GM12878 (cell line): ENCODE measurements at regions of chr4 and their contacts with region 1.

Region 1: DNA sequence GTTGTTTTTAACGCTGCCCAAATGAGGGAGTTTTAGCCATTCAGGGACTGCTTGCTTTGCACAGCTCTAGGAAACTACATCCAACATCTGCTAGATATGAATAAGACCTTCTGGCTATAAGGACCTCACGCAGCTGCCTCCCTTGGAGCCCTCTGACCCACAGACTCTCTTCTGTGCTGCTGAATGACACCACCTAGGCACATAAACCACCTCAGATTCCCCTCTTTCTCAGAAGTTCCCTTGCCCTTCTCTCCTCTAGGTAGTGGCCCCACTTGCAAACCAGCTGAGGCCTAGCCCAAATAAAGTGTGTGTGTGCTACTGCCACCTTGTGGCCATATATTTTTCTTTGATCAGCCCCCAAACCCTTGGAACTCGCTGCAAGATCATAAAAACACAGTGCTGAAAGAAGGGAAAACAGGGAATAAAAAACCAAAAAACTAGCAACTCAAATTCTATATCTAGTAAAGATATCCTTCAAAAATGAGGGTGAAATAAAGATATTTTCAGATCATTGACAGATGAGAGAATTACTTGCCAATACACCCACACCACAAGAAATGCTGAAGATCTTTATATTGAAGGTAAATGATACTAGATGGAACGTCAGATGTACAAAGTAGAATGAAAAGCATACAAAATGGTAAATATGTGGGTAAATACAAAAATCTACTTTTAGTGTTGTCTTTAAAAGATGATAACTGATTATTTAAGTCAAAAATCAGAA is 265.9 kb downstream of the ADAMTS3 start:
- DNase-seq: no peak
- ATAC-seq: peak; percentile 99
- H3K4me3 ChIP-seq: no peak overlapping the region
- H3K27ac ChIP-seq: no peak overlapping the region
- H3K4me1 ChIP-seq: no peaks in the 10 kb centered on the region
- H3K27me3 ChIP-seq: no peaks in the 10 kb centered on the region
- CTCF ChIP-seq: peak; percentile 63 to 69 (median 69)
- EP300 ChIP-seq: no peak
- POLR2A ChIP-seq: no peak
- RAD21 ChIP-seq: peak; percentile 67

Region 2: GRCh38 chr4:70601422-70602039 is 1701.6 kb before region 1 on chr4:
- CTCF ChIA-PET with region 1: no interaction called
- POLR2A ChIA-PET with region 1: no interaction called
- RAD21 ChIA-PET with region 1: no interaction called
- SMC1A ChIA-PET with region 1: no interaction called
- in situ Hi-C with region 1: loop called (anchors 25 kb)
- intact Hi-C with region 1: loop called (anchors 10 kb)
- DNase-seq: peak; percentile 34
- ATAC-seq: peak; percentile 98
- H3K4me3 ChIP-seq: no peak overlapping the region
- H3K27ac ChIP-seq: no peak overlapping the region
- H3K4me1 ChIP-seq: no peaks in the 10 kb centered on the region
- H3K27me3 ChIP-seq: no peaks in the 10 kb centered on the region; a peak in 1 of 4 replicates
- CTCF ChIP-seq: peak; percentile 90 to 94 (median 92)
- EP300 ChIP-seq: no peak
- POLR2A ChIP-seq: no peak
- RAD21 ChIP-seq: peak; percentile 99

Region 3: GRCh38 chr4:71366766-71367165 is 936.4 kb before region 1 on chr4:
- CTCF ChIA-PET with region 1: no interaction called
- POLR2A ChIA-PET with region 1: no interaction called
- RAD21 ChIA-PET with region 1: no interaction called
- SMC1A ChIA-PET with region 1: no interaction called
- in situ Hi-C with region 1: no loop called
- intact Hi-C with region 1: no loop called
- DNase-seq: no peak
- ATAC-seq: no peak
- H3K4me3 ChIP-seq: no peak overlapping the region
- H3K27ac ChIP-seq: no peak overlapping the region
- H3K4me1 ChIP-seq: no peaks in the 10 kb centered on the region
- H3K27me3 ChIP-seq: no peaks in the 10 kb centered on the region
- CTCF ChIP-seq: no peak
- EP300 ChIP-seq: no peak
- POLR2A ChIP-seq: no peak
- RAD21 ChIP-seq: no peak

Region 4: GRCh38 chr4:71772592-71772991 is 530.6 kb before region 1 on chr4:
- CTCF ChIA-PET with region 1: interaction called, 14 read pairs
- POLR2A ChIA-PET with region 1: no interaction called
- RAD21 ChIA-PET with region 1: interaction called, 5 read pairs
- SMC1A ChIA-PET with region 1: interaction called, 3 read pairs
- in situ Hi-C with region 1: no loop called
- intact Hi-C with region 1: no loop called
- DNase-seq: no peak
- ATAC-seq: no peak
- H3K4me3 ChIP-seq: no peak overlapping the region
- H3K27ac ChIP-seq: no peak overlapping the region
- H3K4me1 ChIP-seq: no peaks in the 10 kb centered on the region
- H3K27me3 ChIP-seq: no peaks in the 10 kb centered on the region
- CTCF ChIP-seq: peak in 1 of 3 experiments; percentile 23; a peak in 1 of 6 replicates
- EP300 ChIP-seq: no peak
- POLR2A ChIP-seq: no peak
- RAD21 ChIP-seq: peak; percentile 41; the same call in 1 of the 2 replicates

Region 5: DNA sequence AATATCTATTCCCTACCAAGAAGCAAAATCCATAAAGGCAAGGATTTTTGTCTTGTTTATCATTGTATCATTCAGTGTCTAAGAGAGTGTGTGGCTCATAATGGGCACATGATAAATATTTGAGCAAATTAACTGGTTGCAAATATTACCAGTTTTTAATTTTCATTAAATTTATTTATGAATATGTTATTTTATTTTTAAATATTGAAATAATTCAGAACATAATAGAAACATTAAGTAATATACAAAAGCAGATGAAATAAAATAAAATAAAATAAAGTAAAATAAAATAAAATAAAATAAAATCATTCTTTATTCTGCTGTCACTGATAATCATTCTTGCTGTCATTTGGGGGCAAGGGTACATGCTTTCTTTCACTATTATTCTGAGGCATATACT is 150.4 kb before region 1 on chr4:
- CTCF ChIA-PET with region 1: no interaction called
- POLR2A ChIA-PET with region 1: no interaction called
- RAD21 ChIA-PET with region 1: no interaction called
- SMC1A ChIA-PET with region 1: no interaction called
- in situ Hi-C with region 1: no loop called
- intact Hi-C with region 1: no loop called
- DNase-seq: no peak
- ATAC-seq: no peak
- H3K4me3 ChIP-seq: no peak overlapping the region
- H3K27ac ChIP-seq: no peak overlapping the region
- H3K4me1 ChIP-seq: no peaks in the 10 kb centered on the region
- H3K27me3 ChIP-seq: no peaks in the 10 kb centered on the region
- CTCF ChIP-seq: no peak
- EP300 ChIP-seq: no peak
- POLR2A ChIP-seq: no peak
- RAD21 ChIP-seq: no peak

Region 6: DNA sequence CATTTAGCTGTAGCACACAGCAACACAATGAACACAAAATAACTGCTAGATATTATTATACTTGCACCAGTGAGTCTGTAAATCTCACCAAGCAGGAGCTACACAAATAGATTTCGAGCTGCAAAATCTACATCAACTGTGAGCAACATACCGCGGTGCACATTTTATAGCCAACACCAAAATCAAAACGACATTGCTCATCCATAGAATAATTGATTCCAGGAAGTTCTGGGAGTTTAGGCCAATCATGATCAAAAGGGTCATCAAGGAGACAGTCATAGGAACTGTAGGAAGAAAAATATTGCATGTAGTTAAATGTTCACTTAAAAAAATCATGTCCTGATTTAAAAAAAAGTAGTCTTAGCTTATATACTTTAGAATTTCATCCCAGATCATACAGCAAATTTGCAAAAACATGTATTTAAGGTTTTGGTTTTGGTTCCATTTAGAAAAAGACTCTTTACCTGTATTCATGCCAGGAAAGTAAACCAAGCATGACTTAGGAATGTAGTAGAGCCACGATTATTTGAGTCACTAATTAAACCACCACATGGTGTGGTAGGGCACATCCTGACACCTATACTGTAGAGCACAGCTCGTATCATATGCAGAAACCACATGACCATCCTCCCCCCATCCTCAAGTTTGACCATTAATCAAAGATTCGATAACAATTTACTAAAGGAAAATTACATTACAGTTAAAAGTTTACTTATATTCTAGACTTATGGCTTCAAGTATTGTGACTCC is 15.5 kb after region 1 on chr4:
- CTCF ChIA-PET with region 1: interaction called, 39 read pairs
- POLR2A ChIA-PET with region 1: no interaction called
- RAD21 ChIA-PET with region 1: no interaction called
- SMC1A ChIA-PET with region 1: no interaction called
- in situ Hi-C with region 1: no loop called
- intact Hi-C with region 1: no loop called
- DNase-seq: no peak
- ATAC-seq: no peak
- H3K4me3 ChIP-seq: no peak overlapping the region
- H3K27ac ChIP-seq: no peak overlapping the region
- H3K4me1 ChIP-seq: no peaks in the 10 kb centered on the region
- H3K27me3 ChIP-seq: no peaks in the 10 kb centered on the region
- CTCF ChIP-seq: no peak
- EP300 ChIP-seq: no peak
- POLR2A ChIP-seq: no peak
- RAD21 ChIP-seq: no peak

Region 7: DNA sequence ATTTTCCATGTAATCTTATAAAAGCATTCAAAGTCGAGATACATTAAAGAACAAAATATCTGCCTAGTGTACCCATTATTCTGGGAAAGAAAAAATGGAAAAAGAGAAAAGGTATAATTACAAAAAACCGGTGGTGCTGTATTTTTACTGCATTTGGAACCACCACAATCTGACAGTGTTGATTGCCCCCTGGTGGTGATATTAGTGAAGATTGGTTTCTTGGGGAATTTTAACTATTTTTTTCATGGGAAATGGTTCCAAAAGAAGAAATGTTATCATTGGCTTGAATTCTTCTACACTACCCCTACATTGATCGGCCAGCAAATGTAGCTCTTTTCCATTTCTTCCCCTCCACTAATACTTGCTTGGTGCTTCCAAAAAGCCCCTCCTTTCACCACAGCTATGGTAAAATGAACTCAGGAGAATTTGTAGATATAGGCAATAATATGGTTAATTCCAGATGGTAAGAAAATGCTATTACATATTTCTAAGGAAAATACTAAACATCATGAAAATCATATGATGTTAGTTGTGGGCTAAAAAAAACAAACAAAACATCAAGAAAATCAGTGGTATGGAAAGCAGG is 716.4 kb after region 1 on chr4:
- CTCF ChIA-PET with region 1: interaction called, 4 read pairs
- POLR2A ChIA-PET with region 1: no interaction called
- RAD21 ChIA-PET with region 1: interaction called, 3 read pairs
- SMC1A ChIA-PET with region 1: no interaction called
- in situ Hi-C with region 1: loop called (anchors 25 kb)
- intact Hi-C with region 1: no loop called
- DNase-seq: no peak
- ATAC-seq: peak; percentile 48; the same call in 1 of the 3 replicates
- H3K4me3 ChIP-seq: no peak overlapping the region
- H3K27ac ChIP-seq: no peak overlapping the region
- H3K4me1 ChIP-seq: no peaks in the 10 kb centered on the region
- H3K27me3 ChIP-seq: no peaks in the 10 kb centered on the region
- CTCF ChIP-seq: peak; percentile 42 to 67 (median 65); a peak in 5 of 6 replicates
- EP300 ChIP-seq: no peak
- POLR2A ChIP-seq: no peak
- RAD21 ChIP-seq: peak; percentile 87